ENCODE measurements at regions of chr3 and their contacts with region 1.

Region 1: GRCh38 chr3:179562591-179563270 is at the start of gene ACTL6A:
- DNase-seq: peak; percentile 99
- H3K4me3 ChIP-seq: peak within 1 kb of the TSS; percentile 71 to 95 (median 84)
- H3K27ac ChIP-seq: peak within 1 kb of the TSS; percentile 79
- H3K4me1 ChIP-seq: no peaks in the 10 kb centered on the region; a peak in 1 of 7 replicates
- H3K27me3 ChIP-seq: no peaks in the 10 kb centered on the region
- CTCF ChIP-seq: no peak
- EP300 ChIP-seq: no peak
- POLR2A ChIP-seq: peak; percentile 86 to 96
- RAD21 ChIP-seq: no peak
- total RNA-seq, gene ACTL6A: 76.9 and 83.3 TPM in 2 replicates

Region 2: GRCh38 chr3:179410331-179410730 is 152.4 kb before region 1 on chr3:
- CTCF ChIA-PET with region 1: interaction called, 12 read pairs
- POLR2A ChIA-PET with region 1: interaction called, 3 read pairs
- DNase-seq: no peak
- H3K4me3 ChIP-seq: no peak overlapping the region
- H3K27ac ChIP-seq: no peak overlapping the region
- H3K4me1 ChIP-seq: 0 out of 7 replicates have a peak, but pooled peaks cover 0 to 3% (median 0%) of the 10 kb centered on the region in 4 experiments
- H3K27me3 ChIP-seq: no peaks in the 10 kb centered on the region
- CTCF ChIP-seq: no peak
- EP300 ChIP-seq: no peak
- POLR2A ChIP-seq: no peak
- RAD21 ChIP-seq: peak; percentile 35 to 43

Region 3: GRCh38 chr3:179446501-179446900 is 116.2 kb before region 1 on chr3:
- CTCF ChIA-PET with region 1: interaction called, 14 read pairs
- POLR2A ChIA-PET with region 1: interaction called, 11 read pairs
- DNase-seq: no peak
- H3K4me3 ChIP-seq: no peak overlapping the region
- H3K27ac ChIP-seq: no peak overlapping the region
- H3K4me1 ChIP-seq: no peaks in the 10 kb centered on the region
- H3K27me3 ChIP-seq: peaks cover 0 to 10% (median 0%) of the 10 kb centered on the region in 4 experiments; a peak in 2 of 7 replicates
- CTCF ChIP-seq: peak in 2 of 3 experiments; percentile 40 to 53; a peak in 2 of 4 replicates
- EP300 ChIP-seq: no peak
- POLR2A ChIP-seq: no peak
- RAD21 ChIP-seq: peak; percentile 63 to 69

Region 4: GRCh38 chr3:179451265-179452175 is 111.2 kb before region 1 on chr3 and contains the start of gene GNB4:
- CTCF ChIA-PET with region 1: interaction called, 14 read pairs
- POLR2A ChIA-PET with region 1: interaction called, 11 read pairs
- DNase-seq: peak; percentile 27 to 83
- H3K4me3 ChIP-seq: peak within 1 kb of the TSS; percentile 45 to 85 (median 80)
- H3K27ac ChIP-seq: no peak within 1 kb of the TSS
- H3K4me1 ChIP-seq: peaks cover 2 to 8% (median 4%) of the 10 kb centered on the region in 4 experiments; a peak in 4 of 7 replicates
- H3K27me3 ChIP-seq: peaks cover 0 to 10% (median 0%) of the 10 kb centered on the region in 4 experiments; a peak in 2 of 7 replicates
- CTCF ChIP-seq: no peak
- EP300 ChIP-seq: no peak
- POLR2A ChIP-seq: peak in 1 of 2 experiments; percentile 72; a peak in 2 of 3 replicates
- RAD21 ChIP-seq: 0 out of 4 replicates have a peak, but pooled peaks of 1 of the 2 experiments have one; percentile 1
- total RNA-seq, gene GNB4: 26.1 and 29.2 TPM in 2 replicates

Region 5: DNA sequence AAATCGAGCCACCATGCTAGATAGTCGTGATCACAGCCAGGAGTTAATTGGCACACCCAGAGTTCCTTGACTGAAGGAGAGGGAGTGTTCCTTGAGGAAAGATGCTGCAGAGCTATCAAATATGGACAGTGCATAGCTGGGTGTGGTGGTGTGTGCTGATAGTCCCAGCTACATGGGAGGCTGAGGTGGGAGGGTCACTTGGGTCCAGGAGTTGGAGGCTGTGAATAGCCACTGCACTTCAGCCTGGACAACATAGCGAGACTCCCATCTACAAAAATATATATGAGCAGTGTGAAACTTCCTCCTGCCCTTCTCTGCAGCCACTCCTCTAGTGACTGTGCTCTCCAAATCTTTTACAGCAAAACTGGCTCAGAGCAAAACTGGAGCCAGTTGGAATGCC is 80.1 kb after region 1 on chr3:
- CTCF ChIA-PET with region 1: no interaction called
- POLR2A ChIA-PET with region 1: no interaction called
- DNase-seq: no peak
- H3K4me3 ChIP-seq: no peak overlapping the region
- H3K27ac ChIP-seq: no peak overlapping the region
- H3K4me1 ChIP-seq: peaks cover 0 to 3% (median 0%) of the 10 kb centered on the region in 4 experiments; a peak in 1 of 7 replicates
- H3K27me3 ChIP-seq: no peaks in the 10 kb centered on the region
- CTCF ChIP-seq: no peak
- EP300 ChIP-seq: no peak
- POLR2A ChIP-seq: no peak
- RAD21 ChIP-seq: no peak